Psoas muscle (tissue), 8 donors: ENCODE measurements at regions of chr7 and their contacts with region 1.

Region 1: DNA sequence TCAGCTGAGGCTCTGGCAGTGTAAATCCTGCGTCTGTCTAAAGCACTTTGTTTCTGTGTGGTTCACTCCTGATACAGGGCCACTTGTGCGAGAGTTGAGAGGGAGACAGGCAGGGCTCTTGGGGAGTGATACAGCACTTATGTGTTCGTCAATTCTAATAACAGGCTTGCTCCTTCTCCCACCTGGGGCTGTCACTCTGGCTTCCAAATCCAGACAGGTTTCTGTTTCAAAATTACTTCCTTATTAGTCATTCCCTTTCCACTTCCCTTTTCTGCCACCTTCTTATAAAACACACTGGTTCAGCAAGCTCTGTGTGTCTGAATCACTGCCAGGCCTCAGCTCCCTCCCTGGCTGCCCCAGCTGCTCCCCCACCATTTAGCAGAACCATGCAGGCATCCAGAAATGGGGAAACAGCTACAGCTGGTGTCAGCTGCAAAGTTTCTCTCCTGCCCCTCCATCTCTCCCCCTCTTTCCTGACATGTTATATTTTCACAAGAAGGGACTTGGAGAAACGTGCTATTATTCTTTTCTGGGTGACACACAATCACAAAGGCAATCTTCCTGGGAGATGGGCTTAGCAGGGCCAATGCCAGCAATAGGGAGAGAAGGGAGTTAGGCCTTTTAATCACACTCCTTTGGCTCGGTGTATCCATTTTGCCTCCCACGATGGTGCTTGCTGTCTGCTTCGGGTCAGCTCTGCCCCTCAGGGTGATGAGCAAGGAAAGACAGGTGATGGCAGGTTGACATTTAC is 58.4 kb upstream of the ZNRF2 start:
- DNase-seq: peak; percentile 67 to 87
- ATAC-seq: peak; percentile 96 to 98 (median 96)
- H3K4me3 ChIP-seq: peak overlapping the region; percentile 17
- H3K27ac ChIP-seq: peak overlapping the region; percentile 95
- H3K4me1 ChIP-seq: peaks cover 24% of the 10 kb centered on the region
- H3K27me3 ChIP-seq: no peaks in the 10 kb centered on the region
- CTCF ChIP-seq: no peak

Region 2: DNA sequence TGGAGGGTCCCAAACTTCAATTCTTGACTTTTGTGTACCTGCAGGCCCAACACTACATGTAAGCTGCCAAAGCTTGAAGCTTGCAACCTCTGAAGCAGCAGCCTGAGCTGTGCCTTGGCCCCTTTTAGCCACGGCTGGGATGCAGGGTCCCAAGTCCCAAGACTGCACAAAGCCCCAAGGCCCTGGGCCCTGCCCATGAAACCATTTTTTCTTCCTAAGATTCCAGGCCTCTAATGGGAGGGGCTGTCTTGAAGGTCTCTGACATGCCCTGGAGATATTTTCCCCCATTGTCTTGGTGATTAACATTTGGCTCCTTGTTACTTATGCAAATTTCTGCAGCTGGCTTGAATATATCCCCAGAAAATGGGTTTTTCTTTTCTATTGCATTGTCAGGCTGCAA is 38.5 kb before region 1 on chr7:
- intact Hi-C with region 1: loop called in 1 of 2 experiments (anchors 2 kb)
- DNase-seq: no peak
- ATAC-seq: no peak
- H3K4me3 ChIP-seq: no peak overlapping the region
- H3K27ac ChIP-seq: no peak overlapping the region
- H3K4me1 ChIP-seq: peaks cover 31% of the 10 kb centered on the region
- H3K27me3 ChIP-seq: no peaks in the 10 kb centered on the region
- CTCF ChIP-seq: no peak

Region 3: GRCh38 chr7:30244340-30244739 is 18.3 kb after region 1 on chr7:
- intact Hi-C with region 1: loop called in 1 of 2 experiments (anchors 1 kb)
- DNase-seq: no peak
- ATAC-seq: no peak
- H3K4me3 ChIP-seq: no peak overlapping the region
- H3K27ac ChIP-seq: no peak overlapping the region
- H3K4me1 ChIP-seq: peaks cover 3% of the 10 kb centered on the region
- H3K27me3 ChIP-seq: no peaks in the 10 kb centered on the region
- CTCF ChIP-seq: no peak